ENCODE measurements at regions of chr7 and their contacts with region 1.

Region 1: DNA sequence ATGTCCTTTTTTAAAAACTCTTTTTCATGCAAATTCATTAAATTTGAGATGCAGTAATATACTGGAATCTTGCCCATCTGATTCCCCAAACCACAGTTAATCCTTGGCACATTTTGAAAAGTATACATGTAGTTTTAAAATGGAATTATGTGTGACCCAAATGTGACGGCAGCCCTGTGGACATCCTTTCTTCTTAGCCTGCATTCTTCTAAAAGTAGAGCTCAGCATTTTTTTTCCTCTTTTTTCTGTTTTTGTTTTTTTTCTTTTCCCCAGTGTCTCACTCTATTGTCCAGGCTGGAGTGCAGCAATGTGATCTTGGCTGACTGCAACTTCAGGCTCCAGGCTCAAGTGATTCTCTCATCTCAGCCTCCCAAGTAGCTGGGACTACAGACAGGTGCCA is 338.9 kb downstream of the GALNT17 start:
- DNase-seq: no peak
- ATAC-seq: no peak
- H3K4me3 Mint-ChIP-seq: no peak overlapping the region
- H3K27ac Mint-ChIP-seq: peak overlapping the region; percentile 94
- H3K4me1 Mint-ChIP-seq: peaks cover 78% of the 10 kb centered on the region
- H3K27me3 Mint-ChIP-seq: no peaks in the 10 kb centered on the region
- CTCF ChIP-seq: no peak

Region 2: GRCh38 chr7:71429083-71429482 is 41.7 kb before region 1 on chr7:
- CTCF ChIA-PET with region 1: no interaction called
- POLR2A ChIA-PET with region 1: no interaction called
- DNase-seq: no peak
- ATAC-seq: no peak
- H3K4me3 Mint-ChIP-seq: no peak overlapping the region
- H3K27ac Mint-ChIP-seq: 0 out of 2 replicates have a peak overlapping the region, but pooled peaks have one; percentile 13
- H3K4me1 Mint-ChIP-seq: peaks cover 25% of the 10 kb centered on the region
- H3K27me3 Mint-ChIP-seq: no peaks in the 10 kb centered on the region
- CTCF ChIP-seq: no peak

Region 3: GRCh38 chr7:71457846-71458590 is 12.8 kb before region 1 on chr7:
- CTCF ChIA-PET with region 1: interaction called, 10 read pairs
- POLR2A ChIA-PET with region 1: interaction called, 4 read pairs
- DNase-seq: peak; percentile 44
- ATAC-seq: peak; percentile 30
- H3K4me3 Mint-ChIP-seq: peak overlapping the region; percentile 34
- H3K27ac Mint-ChIP-seq: peak overlapping the region; percentile 95
- H3K4me1 Mint-ChIP-seq: peaks cover 97% of the 10 kb centered on the region
- H3K27me3 Mint-ChIP-seq: no peaks in the 10 kb centered on the region
- CTCF ChIP-seq: no peak

Measured in WTC11 (cell line).